ENCODE measurements at regions of chr15 and their contacts with region 1.

Region 1: GRCh38 chr15:67109141-67110034 is 44.0 kb downstream of the SMAD3 start:
- DNase-seq: no peak
- H3K4me3 Mint-ChIP-seq: no peak overlapping the region
- H3K27ac Mint-ChIP-seq: peak overlapping the region; percentile 74
- H3K4me1 Mint-ChIP-seq: peaks cover 59% of the 10 kb centered on the region
- H3K27me3 Mint-ChIP-seq: no peaks in the 10 kb centered on the region

Region 2: DNA sequence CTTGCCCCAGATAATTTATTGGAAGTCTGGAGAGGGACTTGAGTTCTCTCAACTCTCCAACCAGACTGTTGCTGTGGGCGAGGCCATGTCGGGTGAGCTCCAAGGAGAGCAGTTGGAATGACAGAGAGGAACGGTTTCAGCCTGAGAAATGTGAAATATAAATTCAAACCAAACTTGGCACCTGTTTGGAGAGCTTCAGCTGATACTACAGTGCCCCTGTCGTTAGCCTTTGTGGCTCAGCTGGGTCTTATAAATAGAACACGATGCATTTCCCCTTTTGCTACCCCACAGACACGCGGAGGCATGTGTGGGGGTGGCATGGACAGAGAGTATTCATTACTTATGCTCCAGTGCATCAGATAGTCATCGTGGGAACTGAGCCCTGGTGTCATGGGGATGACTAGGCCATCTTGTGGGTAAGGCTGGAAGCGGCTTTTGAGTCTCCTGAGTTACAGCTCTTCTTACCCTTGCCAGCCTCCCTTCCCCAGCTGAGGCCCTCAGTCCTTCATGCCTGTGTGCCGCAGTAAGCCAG is 28.4 kb before region 1 on chr15:
- CTCF ChIA-PET with region 1: no interaction called
- POLR2A ChIA-PET with region 1: interaction called, 489 read pairs
- DNase-seq: peak; percentile 72
- H3K4me3 Mint-ChIP-seq: peak overlapping the region; percentile 41
- H3K27ac Mint-ChIP-seq: peak overlapping the region; percentile 95
- H3K4me1 Mint-ChIP-seq: peaks cover 96% of the 10 kb centered on the region
- H3K27me3 Mint-ChIP-seq: no peaks in the 10 kb centered on the region

Region 3: GRCh38 chr15:67120839-67121643 is 11.7 kb after region 1 on chr15:
- CTCF ChIA-PET with region 1: interaction called, 5 read pairs
- POLR2A ChIA-PET with region 1: interaction called, 117 read pairs
- DNase-seq: peak; percentile 86
- H3K4me3 Mint-ChIP-seq: peak overlapping the region; percentile 23
- H3K27ac Mint-ChIP-seq: peak overlapping the region; percentile 77
- H3K4me1 Mint-ChIP-seq: peaks cover 95% of the 10 kb centered on the region
- H3K27me3 Mint-ChIP-seq: no peaks in the 10 kb centered on the region